ENCODE measurements at regions of chr1 and their contacts with region 1.

Region 1: DNA sequence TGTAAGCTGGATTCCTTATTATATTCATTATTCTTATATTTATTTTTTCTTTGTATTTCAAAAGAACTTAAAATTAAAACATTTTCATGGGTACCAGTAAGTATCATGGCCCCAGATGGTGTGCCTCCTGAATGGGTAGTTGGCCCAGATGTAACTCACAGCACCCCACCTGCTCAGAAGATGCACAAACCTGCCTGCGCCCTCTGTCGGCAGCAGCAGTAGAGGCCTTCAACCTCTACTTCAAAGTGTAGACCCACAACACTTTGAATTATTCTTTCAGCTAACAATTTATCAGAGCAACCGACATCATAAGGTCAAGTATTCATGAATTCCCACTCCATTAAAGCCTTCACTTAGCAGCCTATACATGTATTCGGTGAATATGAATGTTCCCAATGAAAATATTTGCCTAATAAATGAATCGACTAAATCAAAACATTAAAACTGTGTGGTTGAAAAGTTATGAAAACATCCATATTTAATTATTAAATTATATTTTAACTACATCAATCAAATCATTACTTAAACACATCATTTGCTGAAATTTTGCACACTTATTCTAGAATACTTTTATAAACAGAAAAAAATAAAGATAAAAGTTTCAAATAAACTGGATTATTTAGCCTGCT is 25.4 kb downstream of the PIGM start:
- DNase-seq: peak; percentile 91
- H3K4me3 Mint-ChIP-seq: no peak overlapping the region
- H3K27ac Mint-ChIP-seq: no peak overlapping the region
- H3K4me1 Mint-ChIP-seq: no peaks in the 10 kb centered on the region
- H3K27me3 Mint-ChIP-seq: peaks cover 21% of the 10 kb centered on the region

Region 2: DNA sequence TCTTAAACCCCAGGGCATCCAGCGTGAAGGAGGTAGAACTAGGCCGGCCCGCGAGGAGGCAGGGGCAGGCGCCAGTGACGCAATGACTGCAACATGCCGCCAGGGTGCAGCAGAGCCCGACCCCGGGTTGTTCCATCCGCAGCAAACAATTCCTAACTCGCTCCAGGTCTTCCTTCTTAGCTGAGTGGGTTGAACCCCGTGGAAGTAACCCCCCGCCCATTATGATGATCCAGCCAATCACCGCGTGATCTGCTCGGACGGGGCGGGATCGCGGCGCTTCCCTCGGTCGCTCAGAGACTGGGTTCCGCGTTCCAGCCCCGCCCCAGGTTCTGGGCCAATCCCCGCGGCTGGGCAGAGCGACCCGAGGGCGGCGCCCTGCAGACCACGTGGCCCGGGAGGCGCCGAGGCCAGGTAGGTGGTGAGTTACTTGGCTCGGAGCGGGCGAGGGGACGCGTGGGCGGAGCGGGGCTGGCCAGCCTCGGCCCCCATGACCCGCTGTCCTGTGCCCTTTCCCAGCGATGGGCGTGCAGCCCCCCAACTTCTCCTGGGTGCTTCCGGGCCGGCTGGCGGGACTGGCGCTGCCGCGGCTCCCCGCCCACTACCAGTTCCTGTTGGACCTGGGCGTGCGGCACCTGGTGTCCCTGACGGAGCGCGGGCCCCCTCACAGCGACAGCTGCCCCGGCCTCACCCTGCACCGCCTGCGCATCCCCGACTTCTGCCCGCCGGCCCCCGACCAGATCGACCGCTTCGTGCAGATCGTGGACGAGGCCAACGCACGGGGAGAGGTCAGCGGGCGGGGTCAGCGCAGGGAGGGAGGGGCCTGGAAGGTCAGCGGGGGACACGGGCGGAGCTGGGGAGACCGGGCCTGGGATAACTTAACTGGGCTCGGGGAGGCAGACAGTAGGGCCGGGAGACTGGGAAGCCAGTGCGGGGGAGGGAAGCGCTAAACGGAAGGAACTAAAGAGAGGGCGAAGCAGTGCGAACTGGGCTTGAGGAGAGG is 225.5 kb before region 1 on chr1 and contains the start of gene DUSP23:
- intact Hi-C with region 1: loop called (anchors 5 kb)
- DNase-seq: peak; percentile 99
- H3K4me3 Mint-ChIP-seq: peak within 1 kb of the TSS; percentile 80
- H3K27ac Mint-ChIP-seq: peak within 1 kb of the TSS; percentile 30
- H3K4me1 Mint-ChIP-seq: peaks cover 7% of the 10 kb centered on the region
- H3K27me3 Mint-ChIP-seq: peaks cover 19% of the 10 kb centered on the region
- total RNA-seq, gene DUSP23: 30.9 and 33.0 TPM in 2 replicates

Region 3: DNA sequence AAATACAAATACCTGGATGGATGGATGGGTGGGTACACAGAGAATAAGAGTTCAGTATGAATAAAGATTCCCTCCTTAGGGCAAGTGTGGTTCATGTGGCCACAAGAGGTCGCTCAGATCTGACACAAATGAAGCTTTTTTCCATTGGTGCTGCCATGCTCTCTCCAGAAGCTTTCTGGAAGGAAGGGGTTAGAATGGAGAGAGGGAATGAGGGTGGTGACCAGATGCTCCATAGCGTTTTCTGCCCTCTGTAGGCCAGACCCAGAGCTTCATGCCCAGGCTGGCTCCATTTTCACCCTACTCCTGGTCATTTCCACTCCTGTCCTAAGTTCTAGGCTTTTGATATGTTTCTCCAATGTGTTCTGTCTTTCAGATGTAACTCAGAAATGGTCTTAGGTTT is 207.5 kb before region 1 on chr1:
- intact Hi-C with region 1: loop called (anchors 2 kb)
- DNase-seq: peak; percentile 83
- H3K4me3 Mint-ChIP-seq: no peak overlapping the region
- H3K27ac Mint-ChIP-seq: no peak overlapping the region
- H3K4me1 Mint-ChIP-seq: peaks cover 18% of the 10 kb centered on the region
- H3K27me3 Mint-ChIP-seq: peaks cover 53% of the 10 kb centered on the region

Region 4: DNA sequence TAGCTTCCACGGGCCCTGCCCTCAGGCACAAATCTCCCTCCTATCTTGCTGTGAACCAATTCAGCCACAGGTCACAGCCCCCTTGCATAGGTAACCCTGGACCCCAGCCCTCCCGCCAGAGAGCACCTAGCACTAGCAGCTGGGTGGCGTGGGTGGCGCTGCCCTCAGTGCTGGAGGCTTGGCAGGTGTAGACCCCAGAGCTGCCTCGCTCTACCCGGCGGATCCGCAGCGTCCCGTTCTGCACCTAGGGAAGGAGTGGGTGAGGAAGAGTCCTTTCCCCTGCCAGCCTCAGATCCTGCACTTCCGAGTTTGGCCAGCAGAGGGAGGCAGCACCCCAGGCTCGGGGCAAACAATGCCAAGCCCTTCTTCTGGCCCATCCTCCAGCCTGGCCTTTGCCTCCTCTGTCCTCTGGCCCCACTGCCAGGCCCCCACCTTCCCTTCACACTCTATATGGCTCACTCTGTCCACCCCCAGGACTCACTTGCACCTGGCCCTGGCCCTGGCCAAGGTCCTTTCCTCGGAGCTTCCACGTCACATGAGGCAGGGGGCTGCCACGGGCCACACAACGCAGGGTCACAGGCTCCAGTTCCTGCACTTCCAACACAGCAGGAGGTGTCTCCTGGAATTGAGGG is 70.0 kb before region 1 on chr1:
- intact Hi-C with region 1: loop called (anchors 1 kb)
- DNase-seq: peak; percentile 96
- H3K4me3 Mint-ChIP-seq: no peak overlapping the region
- H3K27ac Mint-ChIP-seq: no peak overlapping the region
- H3K4me1 Mint-ChIP-seq: peaks cover 17% of the 10 kb centered on the region
- H3K27me3 Mint-ChIP-seq: peaks cover 25% of the 10 kb centered on the region

Measured in activated CD4-positive, alpha-beta T cell treated with anti-CD3 and anti-CD28 coated beads, Interleukin-2, amount 10 ng/mL, durations not matched to agents 24 days and 14 days (primary cell).